Activated CD4-positive, alpha-beta memory T cell treated with anti-CD3 and anti-CD28 coated beads, Interleukin-2, amount 10 ng/mL, durations not matched to agents 7 days and 5 days (primary cell): ENCODE measurements at regions of chr6 and their contacts with region 1.

Region 1: GRCh38 chr6:16704401-16705045 is 56.7 kb downstream of the ATXN1 start:
- DNase-seq: peak; percentile 71
- H3K4me3 Mint-ChIP-seq: peak overlapping the region; percentile 80
- H3K27ac Mint-ChIP-seq: peak overlapping the region; percentile 89
- H3K4me1 Mint-ChIP-seq: peaks cover 79% of the 10 kb centered on the region
- H3K27me3 Mint-ChIP-seq: no peaks in the 10 kb centered on the region

Region 2: GRCh38 chr6:16670183-16670582 is 34.3 kb before region 1 on chr6:
- CTCF ChIA-PET with region 1: interaction called, 3 read pairs
- POLR2A ChIA-PET with region 1: interaction called, 68 read pairs
- DNase-seq: peak; percentile 29
- H3K4me3 Mint-ChIP-seq: peak overlapping the region; percentile 60
- H3K27ac Mint-ChIP-seq: peak overlapping the region; percentile 96
- H3K4me1 Mint-ChIP-seq: peaks cover 79% of the 10 kb centered on the region
- H3K27me3 Mint-ChIP-seq: no peaks in the 10 kb centered on the region

Region 3: GRCh38 chr6:16690608-16691198 is 13.8 kb before region 1 on chr6:
- CTCF ChIA-PET with region 1: interaction called, 5 read pairs
- POLR2A ChIA-PET with region 1: interaction called, 50 read pairs
- DNase-seq: peak; percentile 51
- H3K4me3 Mint-ChIP-seq: peak overlapping the region; percentile 2
- H3K27ac Mint-ChIP-seq: peak overlapping the region; percentile 70
- H3K4me1 Mint-ChIP-seq: peaks cover 86% of the 10 kb centered on the region
- H3K27me3 Mint-ChIP-seq: no peaks in the 10 kb centered on the region

Region 4: DNA sequence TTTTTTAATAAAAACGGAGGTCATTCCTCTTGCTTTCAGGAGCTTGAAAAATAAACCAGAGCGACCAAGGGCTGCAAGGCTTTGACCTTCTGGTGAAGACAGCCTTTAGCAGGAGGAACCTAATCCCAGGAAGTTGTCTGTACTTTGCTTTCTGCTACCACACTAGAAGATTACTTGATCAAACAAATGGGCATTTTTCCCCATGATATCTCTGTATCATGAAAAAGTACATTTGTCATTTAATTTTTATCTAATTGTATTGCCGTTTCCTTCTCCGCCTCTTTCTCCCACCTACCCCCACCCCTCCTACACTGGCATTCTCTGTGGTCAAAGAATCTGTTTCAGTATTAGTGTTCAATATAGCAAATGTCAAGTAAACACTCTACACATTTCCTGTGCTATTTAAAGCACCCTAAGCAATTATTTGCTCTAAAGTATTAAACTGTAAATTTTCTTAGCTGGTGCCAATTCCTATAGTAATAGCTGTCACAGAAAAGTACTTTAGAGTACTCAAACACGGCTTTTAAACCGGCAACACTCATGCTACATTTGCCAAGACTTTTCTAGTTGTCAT is 27.0 kb after region 1 on chr6:
- CTCF ChIA-PET with region 1: interaction called, 19 read pairs
- POLR2A ChIA-PET with region 1: interaction called, 62 read pairs
- DNase-seq: peak; percentile 63
- H3K4me3 Mint-ChIP-seq: peak overlapping the region; percentile 61
- H3K27ac Mint-ChIP-seq: peak overlapping the region; percentile 86
- H3K4me1 Mint-ChIP-seq: peaks cover 75% of the 10 kb centered on the region
- H3K27me3 Mint-ChIP-seq: no peaks in the 10 kb centered on the region